Esophagus muscularis mucosa (tissue), 4 donors: ENCODE measurements at regions of chr11 and their contacts with region 1.

Region 1: DNA sequence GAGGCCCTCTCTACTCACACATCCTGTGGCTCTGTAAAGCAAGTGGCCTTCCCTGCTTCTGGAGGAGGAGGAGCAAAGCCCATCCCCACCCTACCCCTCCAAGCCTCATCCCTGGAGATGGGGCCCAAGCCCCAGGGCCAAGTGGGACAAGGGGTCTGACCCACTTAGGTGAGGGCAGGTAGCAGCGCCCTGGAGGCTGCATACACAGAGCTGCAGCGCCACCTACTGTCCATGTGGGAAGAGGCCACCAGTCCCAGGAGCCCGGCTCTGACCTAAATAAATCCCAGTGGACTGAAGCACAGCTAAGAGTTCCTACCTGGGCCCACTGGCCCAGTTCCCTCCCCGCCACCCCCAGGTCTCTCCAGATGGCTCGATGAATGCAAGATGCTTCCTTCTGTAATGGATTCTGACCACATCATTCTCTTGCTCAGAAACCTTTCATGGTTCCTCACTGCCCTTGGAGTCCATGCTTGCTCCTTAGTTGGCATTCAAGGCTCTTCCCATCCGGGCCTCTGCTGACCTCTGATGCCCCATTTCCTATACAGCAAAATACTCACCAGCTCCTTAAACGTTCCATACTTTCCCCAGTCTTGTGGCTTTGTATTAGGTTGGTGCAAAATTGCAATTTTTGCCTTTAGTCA is 62.1 kb downstream of the THAP12 start:
- DNase-seq: peak; percentile 95
- H3K4me3 ChIP-seq: no peak overlapping the region
- H3K27ac ChIP-seq: no peak overlapping the region
- H3K4me1 ChIP-seq: peaks cover 3 to 18% (median 9%) of the 10 kb centered on the region in 4 donors
- H3K27me3 ChIP-seq: peaks cover 0 to 41% (median 10%) of the 10 kb centered on the region in 4 donors
- CTCF ChIP-seq: peak; percentile 91 to 97 (median 92)
- EP300 ChIP-seq: no peak
- POLR2A ChIP-seq: no peak

Region 2: DNA sequence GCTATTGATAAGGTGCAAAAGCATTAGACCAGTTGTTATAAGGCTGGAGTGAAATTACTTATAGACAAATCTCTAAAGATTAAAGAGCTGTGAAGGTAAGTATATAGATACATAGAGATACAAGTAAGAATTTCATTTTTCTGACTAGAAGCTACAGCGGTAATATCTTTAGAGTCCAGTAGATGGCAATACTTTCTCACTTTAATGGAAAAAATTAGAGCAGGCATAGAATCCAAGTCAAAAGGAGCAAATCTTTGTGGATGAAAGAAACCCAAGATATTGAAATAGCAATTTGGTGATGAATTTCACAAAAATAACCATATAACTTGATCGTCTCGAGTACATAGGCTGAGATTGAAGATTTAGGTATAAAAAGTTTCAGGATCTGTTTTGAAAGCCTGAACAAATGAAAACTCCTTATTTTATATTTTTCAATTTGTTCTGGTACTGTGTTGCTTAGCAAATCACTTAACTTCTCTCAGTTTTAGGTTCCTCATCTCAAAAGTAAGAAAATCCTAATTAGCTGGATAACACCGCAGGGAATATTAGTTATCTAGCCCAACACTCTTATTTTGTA is 421.9 kb before region 1 on chr11:
- intact Hi-C with region 1: loop called (anchors 5 kb)
- DNase-seq: no peak
- H3K4me3 ChIP-seq: no peak overlapping the region
- H3K27ac ChIP-seq: no peak overlapping the region
- H3K4me1 ChIP-seq: peaks cover 0 to 36% (median 35%) of the 10 kb centered on the region in 4 donors
- H3K27me3 ChIP-seq: no peaks in the 10 kb centered on the region
- CTCF ChIP-seq: peak; percentile 74 to 81 (median 81)
- EP300 ChIP-seq: no peak
- POLR2A ChIP-seq: no peak

Region 3: GRCh38 chr11:76207642-76208401 is 111.0 kb before region 1 on chr11:
- intact Hi-C with region 1: loop called (anchors 1 kb)
- DNase-seq: no peak
- H3K4me3 ChIP-seq: peak overlapping the region; percentile 62 to 68 (median 65)
- H3K27ac ChIP-seq: peak overlapping the region in 1 of 4 donors; percentile 70
- H3K4me1 ChIP-seq: peaks cover 39 to 60% (median 57%) of the 10 kb centered on the region in 4 donors
- H3K27me3 ChIP-seq: peaks cover 0 to 40% (median 0%) of the 10 kb centered on the region in 4 donors
- CTCF ChIP-seq: peak; percentile 96 to 98 (median 98)
- EP300 ChIP-seq: no peak
- POLR2A ChIP-seq: no peak

Region 4: GRCh38 chr11:76768088-76768908 is 449.4 kb after region 1 on chr11:
- intact Hi-C with region 1: no loop called
- DNase-seq: no peak
- H3K4me3 ChIP-seq: peak overlapping the region in 2 of 4 donors; percentile 23 to 24
- H3K27ac ChIP-seq: peak overlapping the region; percentile 42 to 58 (median 56)
- H3K4me1 ChIP-seq: peaks cover 67 to 93% (median 81%) of the 10 kb centered on the region in 4 donors
- H3K27me3 ChIP-seq: no peaks in the 10 kb centered on the region
- CTCF ChIP-seq: no peak
- EP300 ChIP-seq: no peak
- POLR2A ChIP-seq: no peak